AG04450 (cell line): ENCODE measurements at regions of chr17 and their contacts with region 1.

Region 1: GRCh38 chr17:45115871-45116724 is 16.2 kb downstream of the PLCD3 start:
- DNase-seq: no peak
- H3K4me3 ChIP-seq: no peak overlapping the region
- H3K27ac ChIP-seq: no peak overlapping the region
- H3K27me3 ChIP-seq: no peaks in the 10 kb centered on the region
- CTCF ChIP-seq: no peak

Region 2: GRCh38 chr17:45098869-45099616 is 17.1 kb before region 1 on chr17:
- CTCF ChIA-PET with region 1: interaction called, 11 read pairs
- POLR2A ChIA-PET with region 1: no interaction called
- DNase-seq: peak; percentile 44
- H3K4me3 ChIP-seq: no peak overlapping the region
- H3K27ac ChIP-seq: peak overlapping the region; percentile 39
- H3K27me3 ChIP-seq: no peaks in the 10 kb centered on the region
- CTCF ChIP-seq: peak; percentile 83